ENCODE measurements at regions of chr1 and their contacts with region 1.

Region 1: GRCh38 chr1:2308844-2309243 is 80.7 kb downstream of the SKI start:
- DNase-seq: no peak
- H3K4me3 ChIP-seq: no peak overlapping the region
- H3K27ac ChIP-seq: peak overlapping the region; percentile 30
- H3K4me1 ChIP-seq: peaks cover 44% of the 10 kb centered on the region
- H3K27me3 ChIP-seq: no peaks in the 10 kb centered on the region
- CTCF ChIP-seq: no peak

Region 2: GRCh38 chr1:1507305-1507704 is 801.5 kb before region 1 on chr1:
- CTCF ChIA-PET with region 1: interaction called, 10 read pairs
- POLR2A ChIA-PET with region 1: no interaction called
- intact Hi-C with region 1: no loop called
- DNase-seq: no peak
- H3K4me3 ChIP-seq: no peak overlapping the region
- H3K27ac ChIP-seq: no peak overlapping the region
- H3K4me1 ChIP-seq: no peaks in the 10 kb centered on the region
- H3K27me3 ChIP-seq: no peaks in the 10 kb centered on the region
- CTCF ChIP-seq: no peak

Measured in A673 (cell line).